HCT116 (cell line): ENCODE measurements at regions of chr2 and their contacts with region 1.

Region 1: DNA sequence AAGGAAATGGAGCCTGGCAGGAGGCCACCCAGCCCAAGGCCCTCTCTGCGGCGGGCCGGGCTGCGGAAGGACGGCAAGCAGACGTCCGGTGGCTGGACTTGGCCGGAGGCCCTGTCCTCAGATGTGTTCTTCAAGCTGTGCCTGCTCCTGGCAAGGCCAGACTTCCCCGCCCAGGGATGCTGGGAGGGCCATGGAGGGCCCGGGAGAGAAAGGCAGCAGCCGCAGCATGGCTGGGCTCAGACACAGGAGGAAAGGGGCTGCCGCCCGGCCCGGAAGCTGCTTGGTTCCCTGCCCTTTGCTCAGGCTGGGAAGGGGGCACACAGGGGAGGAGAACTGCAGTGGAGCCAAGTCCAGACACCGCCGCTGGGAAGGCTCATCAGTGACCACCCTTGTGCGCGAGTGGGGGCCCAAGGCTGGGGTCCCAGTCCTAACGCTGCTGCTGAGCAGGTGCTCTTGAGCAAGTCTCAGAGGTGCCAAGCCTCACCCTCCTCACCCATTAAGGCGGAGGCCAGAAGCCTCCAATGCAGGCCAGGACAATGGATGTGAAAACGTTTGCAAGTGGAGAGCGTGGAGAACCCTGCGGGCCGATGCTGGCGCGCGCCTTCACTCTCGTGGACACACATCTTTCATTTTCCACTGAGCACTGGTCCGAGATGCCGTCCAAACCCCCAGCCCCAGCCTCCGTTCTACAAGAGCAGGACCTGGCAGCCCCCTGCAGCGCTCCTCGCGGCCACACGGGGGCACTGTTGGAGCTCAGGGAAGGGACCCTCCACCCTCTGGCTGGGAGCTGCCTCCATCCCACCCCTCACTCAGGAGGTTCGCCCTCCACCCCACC is 7.9 kb downstream of the CROCC2 start:
- DNase-seq: no peak
- ATAC-seq: peak; percentile 78
- H3K4me3 ChIP-seq: no peak overlapping the region
- H3K27ac ChIP-seq: no peak overlapping the region
- H3K4me1 ChIP-seq: peaks cover 0 to 12% of the 10 kb centered on the region in 2 experiments; a peak in 1 of 4 replicates
- H3K27me3 ChIP-seq: peaks cover 4% of the 10 kb centered on the region; the same call in 1 of the 2 replicates
- CTCF ChIP-seq: peak; percentile 60 to 96 (median 95)
- POLR2A ChIP-seq: no peak
- RAD21 ChIP-seq: peak; percentile 79

Region 2: DNA sequence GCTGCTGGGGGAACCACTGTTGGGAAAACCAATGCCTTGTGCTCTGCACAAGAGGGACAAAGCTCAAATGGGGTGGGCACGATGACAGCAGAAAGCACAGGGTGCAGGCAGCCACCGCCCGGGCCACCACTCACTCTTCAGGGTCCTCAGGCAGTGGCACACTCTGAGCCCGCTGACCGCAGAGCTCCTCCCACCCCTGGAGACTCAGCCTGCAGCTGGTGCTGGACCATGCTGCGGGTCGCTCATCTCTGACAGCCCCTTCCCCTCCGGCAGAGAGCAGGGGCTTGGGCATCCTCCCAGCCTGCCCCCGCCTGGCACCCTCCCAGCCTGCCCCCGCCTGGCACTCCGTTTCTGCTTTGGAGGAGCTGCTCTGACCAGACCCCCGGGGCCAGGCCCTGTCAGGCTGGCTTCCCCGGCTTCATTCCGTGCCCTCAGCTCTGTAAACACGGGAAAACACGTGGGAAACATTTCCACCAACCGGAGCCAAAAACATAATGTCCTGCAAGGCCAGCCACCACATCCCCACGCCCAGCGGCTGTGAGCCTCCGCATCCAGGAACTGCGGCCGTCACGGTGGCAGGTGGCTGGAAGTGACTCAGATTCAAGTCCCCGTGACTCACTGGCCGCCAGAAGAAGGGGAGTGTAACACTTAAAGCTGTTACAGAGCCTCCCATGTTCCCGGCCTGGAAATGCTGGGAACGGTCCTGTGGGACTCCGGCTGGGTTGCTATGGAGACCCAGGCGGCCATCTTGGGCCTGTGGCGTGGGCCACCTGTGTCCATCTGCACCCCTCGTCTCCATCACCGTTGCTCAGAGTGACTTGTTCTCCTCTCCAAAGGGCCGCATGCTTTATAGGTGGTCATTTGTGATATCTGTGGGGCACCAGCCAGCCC is 77.6 kb after region 1 on chr2:
- CTCF ChIA-PET with region 1: no interaction called
- POLR2A ChIA-PET with region 1: no interaction called
- RAD21 ChIA-PET with region 1: no interaction called
- intact Hi-C with region 1: loop called (anchors 5 kb)
- DNase-seq: peak; percentile 80
- ATAC-seq: peak; percentile 74
- H3K4me3 ChIP-seq: peak overlapping the region in 1 of 2 experiments; percentile 8; a peak in 1 of 4 replicates
- H3K27ac ChIP-seq: no peak overlapping the region; the same call in 1 of the 2 replicates
- H3K4me1 ChIP-seq: peaks cover 6 to 20% of the 10 kb centered on the region in 2 experiments; a peak in 3 of 4 replicates
- H3K27me3 ChIP-seq: no peaks in the 10 kb centered on the region
- CTCF ChIP-seq: no peak
- POLR2A ChIP-seq: no peak
- RAD21 ChIP-seq: no peak